ENCODE measurements at regions of chr1 and their contacts with region 1.

Region 1: DNA sequence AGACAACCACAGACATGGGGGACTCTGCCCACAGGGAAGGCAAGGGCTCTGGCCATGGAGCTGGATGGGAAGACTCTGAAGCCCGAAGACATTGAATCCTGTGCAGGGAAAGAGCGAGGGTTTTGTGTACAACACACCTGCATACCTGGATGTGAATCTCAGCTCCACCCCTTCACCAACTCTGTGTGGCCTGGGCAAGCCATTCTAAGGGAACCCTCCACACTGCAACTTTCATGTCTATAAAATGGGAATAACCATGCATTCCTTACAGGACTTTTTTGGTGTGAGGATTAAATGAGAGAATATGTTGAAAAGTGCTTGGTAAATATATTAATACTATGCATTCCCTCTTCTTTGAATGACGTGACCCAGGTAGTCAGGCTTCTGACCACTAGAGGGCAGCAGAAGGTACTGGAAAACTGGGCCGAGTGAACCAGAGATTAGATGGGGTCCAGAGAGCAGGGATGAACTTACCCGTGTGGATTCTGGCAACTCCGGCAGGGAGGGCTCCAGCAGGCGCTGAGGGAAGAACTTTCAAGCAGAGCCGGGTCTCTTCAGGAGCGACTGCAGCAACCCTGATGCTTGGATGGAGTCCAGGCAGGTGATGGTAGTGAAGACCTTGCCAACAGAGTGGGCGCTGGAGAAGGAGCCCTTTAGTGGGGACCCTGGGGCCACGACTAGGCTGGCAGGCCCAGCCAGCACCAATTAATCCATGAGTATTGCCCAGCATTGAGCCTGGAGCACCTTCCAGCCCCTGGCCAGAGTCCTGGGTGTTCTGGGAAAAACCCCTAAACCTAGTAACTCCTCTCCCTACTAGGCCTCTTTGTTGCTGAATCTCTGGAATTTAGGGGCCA is 834 bp upstream of the ELF3 start:
- DNase-seq: peak; percentile 55
- H3K4me3 ChIP-seq: no peak overlapping the region
- H3K27ac ChIP-seq: no peak overlapping the region
- H3K27me3 ChIP-seq: peaks cover 10% of the 10 kb centered on the region
- CTCF ChIP-seq: peak; percentile 90

Region 2: DNA sequence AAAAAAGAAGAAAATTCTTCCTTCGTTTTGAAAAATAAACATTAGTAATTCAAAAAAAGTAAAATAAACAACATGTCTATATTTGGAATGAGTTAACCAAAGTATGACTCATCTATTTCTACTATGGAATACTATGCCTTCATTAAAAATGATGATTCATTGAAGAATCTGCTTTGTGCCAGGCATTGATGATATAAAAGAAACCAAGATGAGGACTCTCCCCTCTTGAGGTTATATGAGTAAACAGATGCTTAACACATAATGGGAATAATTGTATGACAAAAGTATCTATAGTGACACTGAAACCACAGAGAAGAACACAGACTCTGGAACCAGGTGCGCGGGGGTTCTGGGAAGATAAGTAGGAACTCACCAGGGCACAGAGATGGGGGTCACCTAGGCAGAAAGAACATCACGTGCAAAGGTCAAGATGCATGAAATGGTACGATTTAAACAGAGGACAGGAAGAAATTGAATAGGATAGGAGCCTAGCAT is 19.7 kb after region 1 on chr1:
- CTCF ChIA-PET with region 1: interaction called, 10 read pairs
- POLR2A ChIA-PET with region 1: no interaction called
- DNase-seq: peak; percentile 33
- H3K4me3 ChIP-seq: no peak overlapping the region
- H3K27ac ChIP-seq: peak overlapping the region; percentile 47
- H3K27me3 ChIP-seq: no peaks in the 10 kb centered on the region
- CTCF ChIP-seq: no peak

Region 3: GRCh38 chr1:202122639-202123335 is 113.2 kb after region 1 on chr1 and contains the start of gene GPR37L1:
- CTCF ChIA-PET with region 1: interaction called, 163 read pairs
- POLR2A ChIA-PET with region 1: interaction called, 4 read pairs
- DNase-seq: no peak
- H3K4me3 ChIP-seq: no peak within 1 kb of the TSS
- H3K27ac ChIP-seq: no peak within 1 kb of the TSS
- H3K27me3 ChIP-seq: peaks cover 26% of the 10 kb centered on the region
- CTCF ChIP-seq: peak; percentile 57
- polyA plus RNA-seq, gene GPR37L1: not detected in 2 replicates

Region 4: DNA sequence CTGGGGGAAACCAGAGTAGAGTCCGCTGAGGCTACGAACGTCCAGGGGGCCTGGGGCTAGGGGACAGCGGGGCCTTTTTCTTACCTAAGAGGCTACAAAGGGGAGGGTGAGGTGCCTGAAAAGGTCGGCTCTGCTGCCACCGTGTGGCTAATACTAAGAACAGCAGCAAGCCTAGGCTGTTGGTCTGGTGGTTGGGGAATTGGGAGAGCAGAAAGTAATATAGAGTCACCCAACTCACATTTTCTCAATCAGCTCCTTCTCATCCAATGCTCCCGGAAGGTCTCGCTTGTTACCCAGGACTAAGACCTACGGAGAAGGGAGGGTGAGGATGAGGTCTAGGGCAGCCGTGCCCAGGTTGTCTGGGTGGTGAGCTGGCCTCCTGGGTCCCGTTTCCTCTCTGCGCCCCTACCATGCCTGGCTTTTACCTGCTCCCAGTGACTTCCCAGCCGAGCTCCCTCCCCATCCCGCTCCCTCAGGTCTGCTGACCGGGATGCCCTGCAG is 125.7 kb after region 1 on chr1:
- CTCF ChIA-PET with region 1: interaction called, 18 read pairs
- POLR2A ChIA-PET with region 1: interaction called, 3 read pairs
- DNase-seq: peak; percentile 30
- H3K4me3 ChIP-seq: no peak overlapping the region
- H3K27ac ChIP-seq: no peak overlapping the region
- H3K27me3 ChIP-seq: no peaks in the 10 kb centered on the region
- CTCF ChIP-seq: peak; percentile 85